HEK293 (cell line): ENCODE measurements at regions of chr9 and their contacts with region 1.

Region 1: GRCh38 chr9:131590908-131591844 is 45.9 kb downstream of the PRRT1B start:
- H3K4me3 ChIP-seq: no peak overlapping the region
- H3K27ac ChIP-seq: no peak overlapping the region
- H3K4me1 ChIP-seq: no peaks in the 10 kb centered on the region
- CTCF ChIP-seq: peak; percentile 88

Region 2: GRCh38 chr9:131603199-131603598 is 12.0 kb after region 1 on chr9:
- CTCF ChIA-PET with region 1: interaction called, 19 read pairs
- POLR2A ChIA-PET with region 1: no interaction called
- H3K4me3 ChIP-seq: no peak overlapping the region
- H3K27ac ChIP-seq: no peak overlapping the region
- H3K4me1 ChIP-seq: no peaks in the 10 kb centered on the region
- CTCF ChIP-seq: no peak

Region 3: DNA sequence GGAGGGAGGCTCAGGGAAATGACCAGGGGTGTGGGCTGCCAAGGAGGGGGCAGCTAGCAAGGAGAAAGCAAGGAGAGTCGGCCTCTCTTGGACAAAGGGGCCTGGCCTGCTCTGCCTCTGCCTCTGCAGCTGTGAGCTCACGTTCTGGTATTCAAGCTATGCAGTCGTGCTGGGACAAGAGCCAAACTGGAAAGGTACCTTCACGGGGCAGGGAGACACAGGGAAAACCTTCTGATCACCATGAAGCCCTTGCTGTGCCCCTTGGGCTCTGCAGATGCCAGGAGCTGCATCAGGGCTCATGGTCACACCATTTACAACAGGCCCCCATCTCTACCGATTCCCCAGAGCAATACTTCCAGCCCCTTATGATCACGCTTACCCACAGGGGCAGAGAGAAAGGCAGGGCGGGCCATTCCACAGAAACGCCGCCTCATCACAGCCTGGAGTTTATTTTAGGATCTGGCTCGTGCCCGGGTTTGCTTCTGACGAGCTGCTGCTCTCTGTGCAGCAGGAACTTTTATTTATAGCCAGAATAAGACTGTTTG is 17.4 kb after region 1 on chr9:
- CTCF ChIA-PET with region 1: interaction called, 13 read pairs
- POLR2A ChIA-PET with region 1: no interaction called
- H3K4me3 ChIP-seq: no peak overlapping the region
- H3K27ac ChIP-seq: no peak overlapping the region
- H3K4me1 ChIP-seq: no peaks in the 10 kb centered on the region
- CTCF ChIP-seq: no peak

Region 4: DNA sequence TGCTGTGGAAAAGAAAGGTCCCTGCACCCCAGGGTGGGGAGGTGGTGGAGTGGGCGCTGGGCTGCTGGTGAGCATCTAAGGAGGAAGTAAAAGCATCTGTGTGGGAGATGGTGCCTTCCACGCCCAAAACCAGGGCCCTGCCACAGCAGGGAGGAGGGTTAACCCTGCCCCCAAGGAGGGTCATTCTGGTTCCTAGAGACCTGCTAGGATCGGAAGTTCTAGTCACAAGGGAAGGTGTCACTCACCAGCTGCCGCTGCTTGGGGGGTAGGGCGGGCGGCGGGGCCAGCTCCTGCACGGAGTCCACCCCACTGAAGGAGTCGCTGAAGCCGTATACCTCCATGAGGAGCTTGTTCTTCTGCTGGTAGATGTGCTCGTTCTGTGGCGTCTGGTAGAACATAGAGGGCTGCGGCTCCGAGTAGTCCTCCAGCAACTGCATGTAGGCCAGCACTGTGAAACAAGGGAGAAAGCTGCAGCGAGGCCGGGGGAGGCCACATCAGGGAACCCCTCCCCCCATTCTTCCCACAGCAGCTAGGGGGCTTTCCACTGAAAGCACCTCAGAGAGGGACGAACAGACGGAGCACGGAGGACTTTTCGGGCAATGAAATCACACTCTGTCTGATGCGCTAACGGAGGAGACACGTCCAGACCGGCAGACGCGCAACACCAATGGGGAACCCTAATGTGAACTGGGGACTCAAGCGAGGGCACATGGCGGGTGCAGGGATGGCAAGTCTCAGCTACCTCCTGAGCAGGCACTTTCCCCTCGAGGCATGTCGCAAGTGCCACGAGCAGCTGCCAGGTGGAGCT is 30.6 kb after region 1 on chr9:
- CTCF ChIA-PET with region 1: interaction called, 10 read pairs
- POLR2A ChIA-PET with region 1: interaction called, 3 read pairs
- H3K4me3 ChIP-seq: no peak overlapping the region
- H3K27ac ChIP-seq: no peak overlapping the region
- H3K4me1 ChIP-seq: peaks cover 2% of the 10 kb centered on the region; the same call in 1 of the 2 replicates
- CTCF ChIP-seq: no peak

Region 5: DNA sequence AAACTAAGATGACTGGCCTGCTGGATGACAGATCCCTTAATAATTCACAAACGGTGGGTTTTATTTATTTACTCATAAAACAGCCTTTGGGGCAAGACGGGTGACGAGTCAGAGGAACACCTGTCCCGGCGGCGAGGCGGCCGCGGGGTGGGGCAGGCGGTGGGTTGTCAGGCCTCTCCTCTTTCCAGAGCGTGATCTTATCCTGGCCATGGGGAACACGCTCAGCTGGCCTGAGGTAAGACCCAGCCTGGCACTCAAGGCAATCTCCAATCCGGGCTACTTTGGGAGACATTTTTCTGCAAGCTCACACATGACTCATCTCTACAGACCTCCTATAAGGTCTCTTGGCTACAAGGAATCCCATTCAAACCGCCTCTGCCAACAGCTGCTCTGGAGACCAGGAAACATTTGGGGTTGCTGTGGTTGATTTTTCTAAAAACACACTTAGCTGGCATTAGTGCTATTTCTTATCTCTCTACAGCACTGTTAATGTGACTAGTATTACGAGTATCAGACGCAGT is 142.4 kb after region 1 on chr9:
- CTCF ChIA-PET with region 1: interaction called, 193 read pairs
- POLR2A ChIA-PET with region 1: interaction called, 3 read pairs
- H3K4me3 ChIP-seq: no peak overlapping the region
- H3K27ac ChIP-seq: 0 out of 2 replicates have a peak overlapping the region, but pooled peaks have one; percentile 30
- H3K4me1 ChIP-seq: peaks cover 37% of the 10 kb centered on the region
- CTCF ChIP-seq: no peak

Region 6: DNA sequence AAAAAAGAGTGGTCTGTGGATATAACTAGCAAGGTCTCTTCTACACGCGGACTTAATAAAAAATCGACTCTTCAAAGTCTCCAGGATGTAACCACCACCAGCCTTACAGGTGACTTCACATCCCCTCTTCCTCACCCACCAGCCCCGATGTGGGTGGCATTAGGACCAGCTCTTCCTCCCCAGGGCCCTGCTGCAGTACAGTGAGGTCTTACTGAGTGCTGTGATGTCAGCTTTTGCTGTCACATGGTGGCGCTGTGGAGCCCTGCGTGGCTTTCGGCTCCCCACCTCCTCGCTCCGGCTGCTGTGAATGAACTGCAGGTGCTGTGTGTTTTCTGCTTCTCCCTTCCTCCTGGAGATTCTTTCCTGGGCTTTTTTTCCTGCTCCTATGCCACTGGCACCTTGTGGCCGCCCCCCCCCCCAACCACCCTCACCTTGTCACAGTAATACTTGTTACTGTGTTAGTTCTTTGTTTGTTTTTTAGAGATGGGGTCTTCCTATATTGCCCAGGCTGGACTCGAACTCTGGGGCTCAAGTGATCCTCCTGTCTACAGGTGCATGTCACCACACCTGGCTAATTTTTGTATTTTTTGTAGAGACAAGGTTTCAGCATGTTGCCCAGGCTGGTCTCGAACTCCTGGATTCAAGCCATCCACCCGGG is 164.5 kb after region 1 on chr9:
- CTCF ChIA-PET with region 1: interaction called, 10 read pairs
- POLR2A ChIA-PET with region 1: no interaction called
- H3K4me3 ChIP-seq: no peak overlapping the region
- H3K27ac ChIP-seq: no peak overlapping the region
- H3K4me1 ChIP-seq: no peaks in the 10 kb centered on the region
- CTCF ChIP-seq: peak; percentile 88